MCF 10A (cell line): ENCODE measurements at regions of chr15 and their contacts with region 1.

Region 1: DNA sequence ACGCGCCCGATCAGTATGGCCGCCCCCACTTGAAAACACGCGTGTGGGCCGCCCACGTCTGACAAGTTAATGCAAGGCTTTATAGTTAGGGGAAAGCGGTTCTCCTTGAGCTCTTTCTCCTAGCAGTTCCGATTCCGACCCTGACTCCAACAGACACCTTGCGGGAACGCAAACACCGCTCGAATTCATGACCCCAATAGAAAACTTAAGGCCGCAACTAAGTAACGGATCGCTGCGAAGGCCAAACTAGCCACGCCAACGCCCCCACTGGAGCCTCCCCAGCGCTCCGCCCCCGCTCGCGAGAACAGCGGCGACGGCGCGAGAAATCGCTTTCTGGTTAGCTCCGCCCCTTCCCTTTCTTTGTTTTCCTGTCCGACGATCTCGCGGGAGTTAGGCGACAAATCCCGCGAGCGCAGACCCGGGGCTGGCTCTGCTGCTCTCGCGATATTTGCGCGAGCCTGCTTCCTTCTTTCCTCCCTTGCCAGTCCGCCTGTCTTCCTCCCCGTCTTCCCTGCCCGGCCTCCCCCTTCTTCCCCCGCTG is at the start of gene IREB2:
- DNase-seq: peak; percentile 98
- H3K4me3 Mint-ChIP-seq: peak within 1 kb of the TSS; percentile 78
- H3K27ac Mint-ChIP-seq: peak within 1 kb of the TSS; percentile 75
- H3K4me1 Mint-ChIP-seq: peaks cover 11% of the 10 kb centered on the region
- H3K27me3 Mint-ChIP-seq: peaks cover 9% of the 10 kb centered on the region
- CTCF ChIP-seq: no peak
- total RNA-seq, gene IREB2: 43.4 and 50.1 TPM in 2 replicates

Region 2: GRCh38 chr15:78299101-78299930 is 138.5 kb before region 1 on chr15 and contains the start of gene SKIC8:
- CTCF ChIA-PET with region 1: no interaction called
- POLR2A ChIA-PET with region 1: interaction called, 54 read pairs
- intact Hi-C with region 1: no loop called
- DNase-seq: peak; percentile 95
- H3K4me3 Mint-ChIP-seq: peak within 1 kb of the TSS; percentile 99
- H3K27ac Mint-ChIP-seq: peak within 1 kb of the TSS; percentile 99
- H3K4me1 Mint-ChIP-seq: peaks cover 6% of the 10 kb centered on the region
- H3K27me3 Mint-ChIP-seq: no peaks in the 10 kb centered on the region
- CTCF ChIP-seq: no peak
- total RNA-seq, gene SKIC8: 54.3 and 56.2 TPM in 2 replicates

Region 3: GRCh38 chr15:78449220-78449999 is 11.6 kb after region 1 on chr15:
- CTCF ChIA-PET with region 1: interaction called, 4 read pairs
- POLR2A ChIA-PET with region 1: interaction called, 17 read pairs
- intact Hi-C with region 1: no loop called
- DNase-seq: no peak
- H3K4me3 Mint-ChIP-seq: no peak overlapping the region
- H3K27ac Mint-ChIP-seq: no peak overlapping the region
- H3K4me1 Mint-ChIP-seq: peaks cover 32% of the 10 kb centered on the region
- H3K27me3 Mint-ChIP-seq: no peaks in the 10 kb centered on the region
- CTCF ChIP-seq: no peak

Region 4: DNA sequence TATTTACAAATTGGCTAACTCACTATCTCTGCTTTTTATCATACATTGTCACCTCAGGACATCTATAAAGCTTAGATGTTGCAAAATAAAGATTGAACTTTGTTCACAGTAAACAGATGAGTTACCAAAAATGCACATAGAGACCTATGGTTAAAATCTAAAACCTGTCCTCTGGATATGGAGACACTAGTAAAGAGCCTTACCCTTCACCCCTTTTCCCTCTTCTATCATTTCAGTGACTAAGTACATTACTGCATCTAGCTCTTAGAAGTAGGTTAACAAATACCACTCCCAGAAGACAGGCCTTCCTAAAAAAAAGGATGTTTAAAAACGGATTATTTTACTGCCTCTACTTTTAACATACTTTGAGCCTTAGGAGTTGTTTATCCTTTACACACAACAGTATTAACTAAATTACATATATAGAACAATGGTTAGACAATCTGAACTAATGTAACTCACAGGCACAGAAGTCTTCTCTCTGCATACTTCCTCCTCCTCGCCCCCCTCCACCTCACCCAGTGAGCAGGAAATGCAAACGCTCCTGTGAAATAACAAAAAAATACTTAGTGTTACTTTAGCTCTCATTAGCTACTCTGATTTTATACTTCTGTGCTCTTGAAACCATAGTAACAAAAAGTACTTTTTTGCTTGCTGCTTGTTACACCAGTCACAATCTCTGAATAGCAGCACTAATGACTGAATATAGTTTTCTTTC is 23.5 kb after region 1 on chr15:
- CTCF ChIA-PET with region 1: interaction called, 4 read pairs
- POLR2A ChIA-PET with region 1: interaction called, 10 read pairs
- intact Hi-C with region 1: no loop called
- DNase-seq: no peak
- H3K4me3 Mint-ChIP-seq: no peak overlapping the region
- H3K27ac Mint-ChIP-seq: no peak overlapping the region
- H3K4me1 Mint-ChIP-seq: peaks cover 23% of the 10 kb centered on the region
- H3K27me3 Mint-ChIP-seq: no peaks in the 10 kb centered on the region
- CTCF ChIP-seq: no peak

Region 5: DNA sequence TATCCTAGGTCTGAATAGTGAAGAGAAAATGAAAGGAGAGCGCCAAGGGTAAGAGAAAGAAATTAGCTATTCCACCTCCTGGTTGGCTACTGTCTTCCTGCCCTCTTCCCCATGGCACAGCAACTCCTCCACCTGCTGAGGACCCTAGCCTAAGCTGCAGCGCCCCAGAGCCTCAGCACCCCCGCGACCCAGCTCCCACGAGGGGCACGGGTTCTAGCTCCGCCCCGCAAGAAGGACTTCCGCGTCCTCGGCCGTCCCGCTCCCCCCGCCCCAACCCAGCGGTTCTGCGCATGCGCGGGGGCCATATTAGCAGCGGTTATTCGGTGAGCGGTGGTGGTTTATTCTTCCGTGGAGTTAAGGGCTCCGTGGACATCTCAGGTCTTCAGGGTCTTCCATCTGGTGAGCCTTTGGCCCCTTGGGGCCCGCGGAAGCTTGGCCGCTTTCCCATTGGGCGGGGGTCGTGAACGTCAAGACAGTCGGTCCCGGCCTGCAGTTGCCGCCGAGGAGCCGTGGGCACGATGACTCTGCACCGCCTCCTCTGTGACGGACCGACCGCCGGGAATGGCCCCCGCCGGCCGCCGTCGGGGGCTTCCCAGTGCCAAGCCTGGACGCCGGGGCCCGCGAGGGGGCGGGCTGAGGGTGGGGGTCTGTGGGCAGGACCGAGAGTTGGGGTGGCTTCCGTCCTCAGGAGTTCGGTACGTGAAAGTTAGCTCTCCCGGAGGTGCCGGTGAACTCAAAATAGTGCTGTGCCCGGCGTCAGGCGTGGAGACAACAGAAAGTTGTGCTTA is 102.5 kb after region 1 on chr15 and contains the start of gene PSMA4:
- CTCF ChIA-PET with region 1: interaction called, 3 read pairs
- POLR2A ChIA-PET with region 1: interaction called, 23 read pairs
- intact Hi-C with region 1: no loop called
- DNase-seq: peak; percentile 88
- H3K4me3 Mint-ChIP-seq: peak within 1 kb of the TSS; percentile 92
- H3K27ac Mint-ChIP-seq: peak within 1 kb of the TSS; percentile 97
- H3K4me1 Mint-ChIP-seq: peaks cover 14% of the 10 kb centered on the region
- H3K27me3 Mint-ChIP-seq: no peaks in the 10 kb centered on the region
- CTCF ChIP-seq: no peak
- total RNA-seq, gene PSMA4: 221 and 261 TPM in 2 replicates